ENCODE measurements at regions of chr1 and their contacts with region 1.

Region 1: DNA sequence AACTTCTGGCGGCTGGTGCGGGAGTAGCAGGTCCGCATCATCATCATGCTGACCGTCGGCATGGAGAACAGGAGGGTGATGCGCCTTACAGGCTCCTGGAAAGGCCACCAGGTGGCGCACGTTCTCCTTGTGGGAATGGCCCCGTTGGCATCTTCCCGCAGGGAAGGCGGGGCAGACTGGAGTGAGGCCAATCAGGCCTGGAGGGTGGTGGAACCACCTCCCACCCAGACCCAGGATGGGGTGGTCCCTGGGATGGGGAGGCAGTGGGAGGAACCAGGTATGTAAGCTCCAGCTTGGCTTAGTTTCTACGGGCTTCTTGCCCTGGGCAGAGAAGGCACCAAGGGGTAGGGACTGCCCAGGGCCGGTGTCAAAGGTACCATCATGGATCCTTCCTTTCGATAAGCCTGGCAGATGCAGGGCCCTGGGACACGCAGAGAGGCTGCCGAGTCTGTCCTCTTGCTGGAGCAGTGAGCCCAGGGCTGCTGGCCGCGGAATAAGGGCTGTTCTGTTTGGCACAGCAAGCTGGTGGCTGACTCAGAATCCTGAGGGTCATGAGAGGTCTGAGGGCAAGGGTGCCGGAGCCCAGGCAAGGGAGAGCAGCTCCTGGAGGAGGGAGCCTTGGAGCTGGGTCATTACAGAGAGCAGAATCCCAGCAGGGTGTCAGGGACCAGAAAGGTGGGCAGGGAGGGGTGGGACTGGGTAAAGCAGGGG is 8.7 kb upstream of the LGR6 start:
- DNase-seq: peak; percentile 72 to 89 (median 83)
- H3K4me3 ChIP-seq: peak overlapping the region in 7 of 59 donors; percentile 2 to 32 (median 12)
- H3K27ac ChIP-seq: no peak overlapping the region
- H3K27me3 ChIP-seq: peaks cover 0 to 8% (median 0%) of the 10 kb centered on the region in 45 donors
- CTCF ChIP-seq: peak; percentile 44 to 90 (median 81)

Region 2: GRCh38 chr1:202034683-202035462 is 150.0 kb before region 1 on chr1:
- intact Hi-C with region 1: no loop called
- DNase-seq: no peak
- H3K4me3 ChIP-seq: no peak overlapping the region
- H3K27ac ChIP-seq: no peak overlapping the region
- H3K27me3 ChIP-seq: no peaks in the 10 kb centered on the region
- CTCF ChIP-seq: no peak

Region 3: GRCh38 chr1:202315576-202316168 is 130.8 kb after region 1 on chr1:
- intact Hi-C with region 1: loop called (anchors 2 to 5 kb)
- DNase-seq: peak; percentile 57 to 83 (median 76)
- H3K4me3 ChIP-seq: no peak overlapping the region
- H3K27ac ChIP-seq: no peak overlapping the region
- H3K27me3 ChIP-seq: no peaks in the 10 kb centered on the region
- CTCF ChIP-seq: peak; percentile 46 to 97 (median 90)

Region 4: GRCh38 chr1:202716654-202717053 is 531.7 kb after region 1 on chr1:
- intact Hi-C with region 1: loop called (anchors 2 to 5 kb)
- DNase-seq: no peak
- H3K4me3 ChIP-seq: no peak overlapping the region
- H3K27ac ChIP-seq: no peak overlapping the region
- H3K27me3 ChIP-seq: peaks cover 0 to under 1% (median 0%) of the 10 kb centered on the region in 45 donors
- CTCF ChIP-seq: no peak

Measured in dorsolateral prefrontal cortex (tissue), 120 donors.